BJ (cell line): ENCODE measurements at regions of chr3 and their contacts with region 1.

Region 1: GRCh38 chr3:184937611-184938010 is 125.6 kb downstream of the VPS8 start:
- DNase-seq: no peak
- H3K4me3 ChIP-seq: no peak overlapping the region
- H3K27me3 ChIP-seq: no peaks in the 10 kb centered on the region
- CTCF ChIP-seq: no peak

Region 2: DNA sequence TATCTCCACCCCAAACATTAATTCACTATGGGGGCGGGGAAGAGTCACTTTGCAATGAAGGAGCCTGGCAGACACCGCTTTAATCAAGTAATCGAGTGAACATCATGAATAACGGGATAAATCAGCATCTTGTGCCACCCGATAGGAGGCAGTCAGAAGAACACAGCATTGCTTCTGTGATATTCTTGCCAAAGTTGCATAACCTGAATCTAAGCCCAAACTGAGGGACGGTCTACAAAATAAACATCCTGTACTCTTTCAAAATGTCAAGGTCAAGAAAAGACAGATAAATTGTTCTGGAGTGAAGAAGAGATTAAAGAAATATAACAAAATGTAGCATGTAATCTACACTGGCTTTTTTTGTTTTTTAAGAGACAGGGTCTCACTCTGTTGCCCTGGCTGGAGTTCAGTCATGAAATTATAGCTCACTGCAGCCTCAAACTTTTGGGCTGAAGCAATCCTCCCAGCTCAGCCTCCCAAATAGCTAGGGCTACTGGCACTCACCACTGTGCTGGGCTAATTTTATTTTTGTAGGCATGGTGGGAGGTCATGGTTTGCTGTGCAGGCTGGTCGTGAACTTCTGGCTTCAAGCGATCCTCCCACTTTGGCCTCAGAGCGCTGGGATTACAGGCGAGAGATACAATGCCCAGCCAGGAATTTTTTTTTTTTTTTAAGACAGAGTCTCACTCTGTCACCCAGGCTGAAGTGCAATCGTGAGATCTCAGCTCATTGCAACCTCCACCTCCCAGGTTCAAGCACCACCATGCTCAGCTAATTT is 728.3 kb before region 1 on chr3:
- CTCF ChIA-PET with region 1: no interaction called
- POLR2A ChIA-PET with region 1: no interaction called
- DNase-seq: no peak
- H3K4me3 ChIP-seq: no peak overlapping the region
- H3K27me3 ChIP-seq: peaks cover 5% of the 10 kb centered on the region; the same call in 1 of the 2 replicates
- CTCF ChIP-seq: no peak

Region 3: GRCh38 chr3:184568924-184569829 is 368.4 kb before region 1 on chr3:
- CTCF ChIA-PET with region 1: no interaction called
- POLR2A ChIA-PET with region 1: no interaction called
- DNase-seq: peak; percentile 93
- H3K4me3 ChIP-seq: peak overlapping the region; percentile 48
- H3K27me3 ChIP-seq: no peaks in the 10 kb centered on the region
- CTCF ChIP-seq: no peak

Region 4: GRCh38 chr3:184636741-184637316 is 300.8 kb before region 1 on chr3:
- CTCF ChIA-PET with region 1: no interaction called
- POLR2A ChIA-PET with region 1: no interaction called
- DNase-seq: peak; percentile 37
- H3K4me3 ChIP-seq: no peak overlapping the region
- H3K27me3 ChIP-seq: no peaks in the 10 kb centered on the region; the same call in 1 of the 2 replicates
- CTCF ChIP-seq: no peak

Region 5: DNA sequence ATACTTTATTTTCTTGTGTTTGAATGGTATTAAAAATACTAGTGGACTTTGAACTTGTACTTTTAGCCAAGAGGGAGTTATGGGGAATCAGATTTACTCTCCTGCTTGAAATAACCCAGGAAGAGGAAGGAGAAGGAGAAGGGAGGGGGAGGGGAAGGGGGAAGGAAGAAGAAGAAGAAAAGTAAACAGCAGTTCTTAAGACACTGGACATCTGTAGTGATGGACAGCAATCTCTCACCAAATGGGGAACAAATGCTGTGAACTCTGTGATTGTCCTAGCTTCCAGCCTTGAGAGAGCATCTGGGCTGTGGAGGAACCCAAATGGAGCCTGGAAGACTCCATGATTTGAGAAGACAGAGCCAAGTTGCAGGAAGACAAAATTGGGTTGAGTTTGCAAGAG is 73.6 kb before region 1 on chr3:
- CTCF ChIA-PET with region 1: no interaction called
- POLR2A ChIA-PET with region 1: interaction called, 12 read pairs
- DNase-seq: no peak
- H3K4me3 ChIP-seq: no peak overlapping the region
- H3K27me3 ChIP-seq: no peaks in the 10 kb centered on the region
- CTCF ChIP-seq: no peak